ENCODE measurements at regions of chr13 and their contacts with region 1.

Region 1: GRCh38 chr13:61954092-61954491 is 538.4 kb upstream of the PCDH20 start:
- DNase-seq: peak; percentile 50
- ATAC-seq: no peak
- H3K4me3 ChIP-seq: no peak overlapping the region
- H3K27ac ChIP-seq: no peak overlapping the region
- H3K4me1 ChIP-seq: no peaks in the 10 kb centered on the region
- H3K27me3 ChIP-seq: no peaks in the 10 kb centered on the region
- CTCF ChIP-seq: peak; percentile 57; the same call in 1 of the 2 replicates

Region 2: DNA sequence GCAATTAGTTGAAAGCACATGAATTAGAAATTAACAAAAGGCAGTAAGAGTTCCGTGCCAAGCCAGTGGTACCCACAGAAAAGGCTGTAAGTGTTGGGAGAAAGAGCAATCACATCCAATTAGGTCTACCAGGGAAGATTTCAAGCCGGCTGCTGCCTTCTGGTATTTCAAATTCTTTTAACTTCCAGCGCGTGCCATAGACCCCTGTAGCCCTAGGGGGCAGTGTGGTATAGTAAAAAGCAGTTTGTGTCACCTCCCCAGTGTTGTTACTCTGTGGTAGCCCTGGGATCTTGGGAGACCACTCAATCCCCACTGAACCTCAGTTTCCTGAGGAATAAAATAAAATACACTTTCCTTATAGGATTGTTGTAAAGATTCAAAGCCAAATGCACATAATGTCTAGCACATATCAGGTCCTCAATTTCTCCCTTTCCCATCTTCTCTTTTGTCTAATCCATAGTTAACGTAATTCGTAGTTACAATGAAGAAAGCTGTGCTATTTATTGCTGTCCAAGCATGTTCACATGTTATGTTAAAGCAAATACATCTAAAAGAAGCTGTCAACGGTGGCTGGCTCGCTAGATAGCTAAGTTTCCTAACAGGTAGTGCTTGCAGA is 1326.9 kb before region 1 on chr13:
- CTCF ChIA-PET with region 1: no interaction called
- POLR2A ChIA-PET with region 1: no interaction called
- intact Hi-C with region 1: loop called (anchors 1 kb)
- DNase-seq: peak; percentile 56
- ATAC-seq: peak; percentile 81
- H3K4me3 ChIP-seq: no peak overlapping the region
- H3K27ac ChIP-seq: no peak overlapping the region
- H3K4me1 ChIP-seq: no peaks in the 10 kb centered on the region
- H3K27me3 ChIP-seq: no peaks in the 10 kb centered on the region
- CTCF ChIP-seq: peak; percentile 71

Region 3: GRCh38 chr13:61410669-61411297 is 543.3 kb before region 1 on chr13:
- CTCF ChIA-PET with region 1: interaction called, 3 read pairs
- POLR2A ChIA-PET with region 1: no interaction called
- intact Hi-C with region 1: loop called (anchors 5 kb)
- DNase-seq: peak; percentile 48
- ATAC-seq: no peak
- H3K4me3 ChIP-seq: no peak overlapping the region
- H3K27ac ChIP-seq: no peak overlapping the region
- H3K4me1 ChIP-seq: no peaks in the 10 kb centered on the region
- H3K27me3 ChIP-seq: no peaks in the 10 kb centered on the region
- CTCF ChIP-seq: peak; percentile 49; the same call in 1 of the 2 replicates

Region 4: DNA sequence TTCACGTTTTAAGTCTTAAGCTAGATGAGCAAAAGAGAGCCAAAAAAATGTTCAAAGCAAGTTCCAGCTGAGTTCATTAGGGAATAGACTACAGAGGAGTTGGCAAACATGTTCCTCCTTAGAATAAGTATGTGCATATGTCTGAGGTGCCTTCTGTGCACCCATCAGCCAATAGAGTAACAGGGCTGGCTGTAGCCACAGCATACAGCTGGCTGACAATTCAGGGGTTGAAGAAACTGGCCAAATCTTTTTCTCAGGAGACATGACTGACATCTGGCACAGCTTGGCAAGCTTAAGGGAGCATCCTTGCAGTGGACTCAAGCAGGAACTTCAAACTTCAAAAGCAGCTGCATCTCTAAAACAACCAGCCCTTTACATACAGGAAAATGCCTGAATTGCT is 123.6 kb before region 1 on chr13:
- CTCF ChIA-PET with region 1: no interaction called
- POLR2A ChIA-PET with region 1: no interaction called
- intact Hi-C with region 1: loop called (anchors 10 kb)
- DNase-seq: no peak
- ATAC-seq: no peak
- H3K4me3 ChIP-seq: no peak overlapping the region
- H3K27ac ChIP-seq: no peak overlapping the region
- H3K4me1 ChIP-seq: no peaks in the 10 kb centered on the region
- H3K27me3 ChIP-seq: no peaks in the 10 kb centered on the region
- CTCF ChIP-seq: no peak

Region 5: GRCh38 chr13:62085337-62086229 is 131.5 kb after region 1 on chr13:
- CTCF ChIA-PET with region 1: no interaction called
- POLR2A ChIA-PET with region 1: no interaction called
- intact Hi-C with region 1: no loop called
- DNase-seq: no peak
- ATAC-seq: no peak
- H3K4me3 ChIP-seq: no peak overlapping the region
- H3K27ac ChIP-seq: no peak overlapping the region
- H3K4me1 ChIP-seq: no peaks in the 10 kb centered on the region
- H3K27me3 ChIP-seq: no peaks in the 10 kb centered on the region
- CTCF ChIP-seq: no peak